Activated CD4-positive, alpha-beta memory T cell treated with anti-CD3 and anti-CD28 coated beads for 36 hours (primary cell): ENCODE measurements at regions of chr19 and their contacts with region 1.

Region 1: DNA sequence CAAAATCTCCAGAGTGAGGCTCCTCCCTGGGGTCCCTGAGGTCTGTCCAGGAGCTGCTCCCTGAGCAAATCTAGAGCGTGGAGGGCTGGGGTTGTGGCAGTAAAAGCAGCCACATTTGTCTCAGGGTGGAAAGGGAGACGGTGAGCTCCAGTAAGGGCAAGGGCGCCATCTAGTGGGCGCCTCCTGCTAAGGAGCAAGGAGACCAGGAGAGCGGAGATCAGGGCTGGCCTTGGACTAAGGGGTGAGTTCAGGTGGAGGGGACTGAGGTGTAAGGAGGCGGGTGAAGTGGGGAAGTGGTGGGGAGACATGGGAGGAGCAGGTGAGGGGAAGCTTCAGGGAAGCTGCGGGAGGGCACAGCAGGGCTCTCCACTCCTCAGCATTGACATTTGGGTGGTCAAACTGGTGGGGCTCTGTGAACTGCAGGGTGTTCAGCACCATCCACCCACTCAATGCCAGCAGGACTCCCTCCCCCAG is 5.3 kb upstream of the CEACAM21 start:
- DNase-seq: peak; percentile 90
- H3K4me3 Mint-ChIP-seq: no peak overlapping the region
- H3K27ac Mint-ChIP-seq: no peak overlapping the region
- H3K4me1 Mint-ChIP-seq: peaks cover 43% of the 10 kb centered on the region
- H3K27me3 Mint-ChIP-seq: no peaks in the 10 kb centered on the region

Region 2: DNA sequence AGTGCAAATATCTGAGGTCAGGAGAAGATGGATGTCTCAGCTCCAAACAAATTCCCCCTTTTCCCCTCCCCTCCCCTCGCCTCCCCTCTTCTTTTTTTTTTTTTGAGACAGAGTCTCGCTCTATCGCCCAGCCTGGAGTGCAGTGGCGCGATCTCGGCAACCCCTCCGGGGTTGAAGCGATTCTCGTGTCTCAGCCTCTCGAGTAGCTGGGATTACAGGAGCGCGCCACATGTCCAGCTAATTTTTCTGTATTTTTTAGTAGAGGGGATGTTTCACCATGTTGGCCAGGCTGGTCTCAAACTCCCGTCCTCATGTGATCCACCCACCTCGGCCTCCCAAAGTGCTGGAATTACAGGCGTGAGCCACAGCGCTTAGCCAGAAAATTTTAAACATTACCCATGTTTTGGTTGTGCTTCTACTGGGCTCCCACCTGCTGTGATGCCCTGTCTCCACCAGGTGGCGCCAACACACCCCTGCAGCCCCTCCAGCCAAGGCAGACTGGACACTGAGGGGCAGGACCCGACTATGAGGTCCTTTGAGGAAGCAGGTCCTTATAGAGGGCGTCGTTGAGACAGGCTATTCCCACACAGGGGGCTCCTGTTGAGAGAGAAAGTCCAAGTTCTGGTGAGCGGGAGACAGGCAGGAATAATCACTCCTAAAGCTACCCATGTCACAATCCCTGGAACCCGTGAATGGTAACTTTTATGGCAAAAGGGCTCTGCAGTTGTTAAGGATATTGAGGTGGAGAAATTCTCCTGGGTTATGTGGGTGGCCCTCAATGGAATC is 121.4 kb before region 1 on chr19:
- CTCF ChIA-PET with region 1: interaction called, 281 read pairs
- POLR2A ChIA-PET with region 1: no interaction called
- intact Hi-C with region 1: loop called (anchors 1 kb)
- DNase-seq: peak; percentile 84
- H3K4me3 Mint-ChIP-seq: peak overlapping the region; percentile 62
- H3K27ac Mint-ChIP-seq: no peak overlapping the region
- H3K4me1 Mint-ChIP-seq: peaks cover 7% of the 10 kb centered on the region
- H3K27me3 Mint-ChIP-seq: peaks cover 9% of the 10 kb centered on the region

Region 3: DNA sequence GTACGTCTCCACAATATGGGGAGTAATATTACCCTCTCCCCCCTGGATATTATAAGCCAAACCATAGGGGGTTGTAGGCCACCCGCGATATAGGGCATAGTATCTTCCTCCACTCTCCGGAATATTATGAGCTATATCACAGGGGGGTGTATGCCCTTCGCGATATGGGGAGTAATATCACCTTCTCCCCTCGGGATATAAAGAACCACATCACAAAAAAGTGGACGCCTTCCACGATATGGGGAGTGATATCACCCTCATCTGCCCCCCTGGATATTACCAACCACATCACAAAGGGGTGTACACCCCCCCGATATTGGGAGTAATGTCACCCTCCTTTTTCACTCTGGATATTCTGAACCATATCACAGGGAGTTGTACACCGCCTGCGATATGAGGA is 60.2 kb before region 1 on chr19:
- CTCF ChIA-PET with region 1: no interaction called
- POLR2A ChIA-PET with region 1: no interaction called
- intact Hi-C with region 1: no loop called
- DNase-seq: no peak
- H3K4me3 Mint-ChIP-seq: no peak overlapping the region
- H3K27ac Mint-ChIP-seq: no peak overlapping the region
- H3K4me1 Mint-ChIP-seq: no peaks in the 10 kb centered on the region
- H3K27me3 Mint-ChIP-seq: peaks cover 21% of the 10 kb centered on the region

Region 4: GRCh38 chr19:41531438-41532311 is 39.0 kb before region 1 on chr19:
- CTCF ChIA-PET with region 1: interaction called, 11 read pairs
- POLR2A ChIA-PET with region 1: interaction called, 4 read pairs
- intact Hi-C with region 1: no loop called
- DNase-seq: peak; percentile 92
- H3K4me3 Mint-ChIP-seq: peak overlapping the region; percentile 74
- H3K27ac Mint-ChIP-seq: peak overlapping the region; percentile 69
- H3K4me1 Mint-ChIP-seq: peaks cover 72% of the 10 kb centered on the region
- H3K27me3 Mint-ChIP-seq: peaks cover 4% of the 10 kb centered on the region

Region 5: GRCh38 chr19:41554907-41555306 is 15.8 kb before region 1 on chr19:
- CTCF ChIA-PET with region 1: interaction called, 67 read pairs
- POLR2A ChIA-PET with region 1: interaction called, 13 read pairs
- intact Hi-C with region 1: no loop called
- DNase-seq: no peak
- H3K4me3 Mint-ChIP-seq: peak overlapping the region; percentile 11
- H3K27ac Mint-ChIP-seq: peak overlapping the region; percentile 96
- H3K4me1 Mint-ChIP-seq: peaks cover 70% of the 10 kb centered on the region
- H3K27me3 Mint-ChIP-seq: no peaks in the 10 kb centered on the region